ENCODE measurements at regions of chr15 and their contacts with region 1.

Region 1: DNA sequence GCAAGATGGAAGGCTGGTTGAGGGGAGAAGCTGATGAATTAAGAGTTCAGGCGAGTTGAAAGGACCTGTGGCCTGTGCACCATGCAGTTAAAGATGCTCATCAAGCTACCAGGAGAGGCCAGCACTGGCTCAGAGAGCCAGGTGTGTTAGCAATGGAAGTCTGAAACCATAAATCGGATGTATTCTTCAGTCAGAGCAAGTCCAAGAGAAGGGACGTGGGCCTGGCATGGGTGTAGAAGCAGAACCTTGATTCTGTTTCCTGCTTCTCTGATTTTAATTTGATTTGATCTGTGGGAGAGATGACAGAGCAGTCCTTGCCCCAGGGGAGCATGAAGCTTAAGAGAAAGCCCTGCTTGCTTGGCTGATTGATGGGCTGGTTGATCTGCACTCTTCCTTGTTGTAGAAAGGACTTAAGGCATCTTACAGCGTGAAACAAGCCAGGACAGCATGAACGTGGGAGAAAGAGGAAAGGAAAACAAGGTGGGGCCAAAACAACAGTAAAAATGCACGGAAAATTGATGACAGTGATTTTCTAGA is 10.9 kb downstream of the TM6SF1 start:
- DNase-seq: no peak
- ATAC-seq: peak; percentile 47
- H3K4me3 ChIP-seq: no peak overlapping the region
- H3K27ac ChIP-seq: no peak overlapping the region
- H3K4me1 ChIP-seq: no peaks in the 10 kb centered on the region; a peak in 1 of 5 replicates
- H3K27me3 ChIP-seq: no peaks in the 10 kb centered on the region; a peak in 1 of 5 replicates
- CTCF ChIP-seq: no peak
- EP300 ChIP-seq: no peak
- POLR2A ChIP-seq: no peak
- RAD21 ChIP-seq: no peak; a peak in 1 of 4 replicates

Region 2: GRCh38 chr15:83129791-83130190 is 11.4 kb after region 1 on chr15:
- CTCF ChIA-PET with region 1: no interaction called
- POLR2A ChIA-PET with region 1: interaction called, 18 read pairs
- in situ Hi-C with region 1: no loop called
- intact Hi-C with region 1: no loop called
- DNase-seq: no peak
- ATAC-seq: no peak
- H3K4me3 ChIP-seq: no peak overlapping the region
- H3K27ac ChIP-seq: no peak overlapping the region
- H3K4me1 ChIP-seq: no peaks in the 10 kb centered on the region
- H3K27me3 ChIP-seq: no peaks in the 10 kb centered on the region
- CTCF ChIP-seq: no peak
- EP300 ChIP-seq: no peak
- POLR2A ChIP-seq: no peak
- RAD21 ChIP-seq: no peak